Kidney (tissue), 22 donors: ENCODE measurements at regions of chr1 and their contacts with region 1.

Region 1: DNA sequence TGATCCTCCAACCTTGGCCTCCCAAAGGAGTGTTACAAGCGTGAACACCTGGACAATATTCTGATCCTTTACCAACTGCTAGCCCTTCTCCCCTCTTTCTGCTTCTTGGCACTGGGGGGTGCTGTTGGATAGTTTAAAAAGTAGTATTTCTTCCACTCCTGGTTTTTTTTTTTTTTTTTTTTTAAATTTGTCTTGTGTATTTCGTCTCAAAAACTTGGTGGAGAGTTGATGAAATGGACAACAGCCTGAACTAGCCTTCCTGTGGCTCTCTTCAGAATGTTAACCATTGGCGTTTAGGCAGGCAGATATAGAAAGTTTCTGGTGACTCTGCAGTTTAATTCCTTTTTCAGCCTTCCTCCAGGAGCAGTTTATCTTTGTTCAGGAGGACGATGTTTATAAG is 69.7 kb upstream of the USP24 start:
- DNase-seq: peak in 3 of 5 donors; percentile 45 to 79 (median 61)
- H3K4me3 ChIP-seq: no peak overlapping the region
- H3K27ac ChIP-seq: no peak overlapping the region
- H3K4me1 ChIP-seq: no peaks in the 10 kb centered on the region
- H3K27me3 ChIP-seq: no peaks in the 10 kb centered on the region
- CTCF ChIP-seq: peak; percentile 59

Region 2: GRCh38 chr1:56584910-56585528 is 1300.2 kb after region 1 on chr1:
- intact Hi-C with region 1: loop called (anchors 5 kb)
- DNase-seq: peak in 3 of 5 donors; percentile 45 to 84 (median 82)
- H3K4me3 ChIP-seq: no peak overlapping the region
- H3K27ac ChIP-seq: no peak overlapping the region
- H3K4me1 ChIP-seq: peaks cover 0 to 3% (median 0%) of the 10 kb centered on the region in 3 donors
- H3K27me3 ChIP-seq: no peaks in the 10 kb centered on the region
- CTCF ChIP-seq: peak; percentile 85